ENCODE measurements at regions of chr5 and their contacts with region 1.

Region 1: DNA sequence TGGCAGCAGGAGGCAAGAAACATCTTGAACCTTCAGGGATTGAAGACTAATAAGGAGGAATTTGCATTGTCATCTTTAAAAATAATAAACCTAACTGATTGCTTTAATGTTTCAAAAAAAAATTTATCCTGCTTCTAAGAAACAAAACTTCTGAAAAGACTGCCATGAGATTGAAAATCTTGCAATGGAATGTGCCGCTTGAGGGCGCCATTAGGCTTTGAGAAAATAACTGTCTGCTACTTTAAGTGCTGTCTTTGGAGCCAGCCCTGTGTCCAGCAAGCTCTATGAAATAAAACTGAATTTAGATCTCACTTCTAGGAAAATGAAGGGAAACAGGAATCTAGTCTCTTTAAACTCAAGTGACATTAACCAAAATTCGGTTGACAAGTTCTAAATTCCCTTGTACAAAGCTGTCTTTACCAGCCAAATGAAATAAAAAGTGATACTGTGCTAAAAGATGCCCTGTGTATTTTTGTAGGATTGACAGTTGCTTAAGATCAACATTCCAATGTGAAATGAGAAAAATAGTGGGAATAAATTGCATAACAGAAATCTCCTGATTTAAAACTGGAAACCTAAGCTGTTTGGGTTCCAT is 79.4 kb downstream of the ESM1 start:
- DNase-seq: peak; percentile 86
- ATAC-seq: no peak
- H3K4me3 Mint-ChIP-seq: no peak overlapping the region
- H3K27ac Mint-ChIP-seq: no peak overlapping the region
- H3K4me1 Mint-ChIP-seq: peaks cover 64% of the 10 kb centered on the region
- H3K27me3 Mint-ChIP-seq: peaks cover 24% of the 10 kb centered on the region

Region 2: GRCh38 chr5:54895816-54896341 is 10.2 kb before region 1 on chr5:
- CTCF ChIA-PET with region 1: interaction called, 11 read pairs
- POLR2A ChIA-PET with region 1: no interaction called
- DNase-seq: no peak
- ATAC-seq: no peak
- H3K4me3 Mint-ChIP-seq: no peak overlapping the region
- H3K27ac Mint-ChIP-seq: no peak overlapping the region
- H3K4me1 Mint-ChIP-seq: peaks cover 4% of the 10 kb centered on the region
- H3K27me3 Mint-ChIP-seq: peaks cover 55% of the 10 kb centered on the region

Region 3: GRCh38 chr5:54981928-54982327 is 75.9 kb after region 1 on chr5:
- CTCF ChIA-PET with region 1: interaction called, 11 read pairs
- POLR2A ChIA-PET with region 1: no interaction called
- DNase-seq: no peak
- ATAC-seq: no peak
- H3K4me3 Mint-ChIP-seq: no peak overlapping the region
- H3K27ac Mint-ChIP-seq: no peak overlapping the region
- H3K4me1 Mint-ChIP-seq: peaks cover 34% of the 10 kb centered on the region
- H3K27me3 Mint-ChIP-seq: peaks cover 24% of the 10 kb centered on the region

Region 4: DNA sequence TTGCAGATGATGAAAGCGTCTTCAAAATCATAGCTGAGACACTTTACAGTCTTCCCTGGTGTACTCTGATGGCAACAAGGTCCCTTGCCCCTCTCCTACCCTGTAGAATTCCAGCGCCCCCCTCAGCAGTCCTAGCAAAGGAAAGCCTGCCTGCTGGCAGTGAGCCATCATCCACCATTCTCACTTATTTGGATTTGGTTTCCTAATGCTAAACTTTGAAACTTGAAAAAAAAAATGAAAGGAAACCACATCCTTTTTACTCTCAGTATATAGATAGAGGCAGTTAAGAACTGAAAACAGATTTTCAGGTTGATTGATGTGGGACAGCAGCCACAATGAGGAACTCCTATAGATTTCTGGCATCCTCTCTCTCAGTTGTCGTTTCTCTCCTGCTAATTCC is 196.3 kb after region 1 on chr5 and contains the start of gene GZMA:
- CTCF ChIA-PET with region 1: interaction called, 12 read pairs
- POLR2A ChIA-PET with region 1: interaction called, 3 read pairs
- DNase-seq: peak; percentile 68
- ATAC-seq: peak; percentile 78
- H3K4me3 Mint-ChIP-seq: peak within 1 kb of the TSS; percentile 84
- H3K27ac Mint-ChIP-seq: peak within 1 kb of the TSS; percentile 94
- H3K4me1 Mint-ChIP-seq: peaks cover 86% of the 10 kb centered on the region
- H3K27me3 Mint-ChIP-seq: peaks cover 2% of the 10 kb centered on the region
- total RNA-seq, gene GZMA: 356 to 365 TPM

Region 5: GRCh38 chr5:55151923-55152842 is 246.1 kb after region 1 on chr5:
- CTCF ChIA-PET with region 1: interaction called, 171 read pairs
- POLR2A ChIA-PET with region 1: no interaction called
- DNase-seq: no peak
- ATAC-seq: no peak
- H3K4me3 Mint-ChIP-seq: no peak overlapping the region
- H3K27ac Mint-ChIP-seq: no peak overlapping the region
- H3K4me1 Mint-ChIP-seq: no peaks in the 10 kb centered on the region
- H3K27me3 Mint-ChIP-seq: peaks cover 42% of the 10 kb centered on the region

Region 6: GRCh38 chr5:55650386-55650785 is 744.3 kb after region 1 on chr5:
- CTCF ChIA-PET with region 1: no interaction called
- POLR2A ChIA-PET with region 1: no interaction called
- DNase-seq: peak; percentile 40
- ATAC-seq: peak; percentile 82
- H3K4me3 Mint-ChIP-seq: peak overlapping the region; percentile 35
- H3K27ac Mint-ChIP-seq: peak overlapping the region; percentile 69
- H3K4me1 Mint-ChIP-seq: peaks cover 34% of the 10 kb centered on the region
- H3K27me3 Mint-ChIP-seq: no peaks in the 10 kb centered on the region